Body of pancreas (tissue), 4 donors: ENCODE measurements at regions of chr12 and their contacts with region 1.

Region 1: DNA sequence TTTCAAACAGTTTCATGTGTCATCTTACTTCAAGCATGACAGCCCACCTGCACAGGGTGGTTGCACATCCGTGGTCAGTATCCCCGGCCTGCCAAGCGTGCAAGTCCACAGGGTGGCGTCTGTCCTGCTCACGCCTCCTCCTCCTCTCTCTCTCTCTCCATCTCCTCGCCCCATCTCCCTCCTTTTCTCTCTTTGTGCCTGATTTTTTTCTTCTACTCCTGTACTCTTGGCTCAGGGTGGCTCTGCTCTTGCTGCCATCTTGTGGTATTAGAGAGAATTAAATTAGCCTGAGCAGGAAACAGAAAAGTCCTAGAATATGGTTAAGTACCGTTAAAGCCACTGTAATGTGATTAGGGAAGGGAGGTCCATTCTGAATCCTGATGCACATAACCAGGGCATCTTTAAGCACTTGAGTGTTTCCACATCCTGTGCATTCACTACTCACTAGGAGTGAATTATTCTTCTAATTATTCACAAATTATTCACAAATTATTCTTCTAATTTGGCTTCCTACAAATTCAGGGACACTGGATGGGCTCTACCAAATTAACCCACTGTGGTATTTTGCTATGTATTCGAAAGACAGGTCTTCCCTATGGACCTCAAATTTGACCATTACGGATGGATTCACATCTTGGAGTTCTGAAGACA is 25.5 kb upstream of the DTX1 start:
- DNase-seq: peak; percentile 18 to 43 (median 36)
- ATAC-seq: peak; percentile 56
- H3K4me3 ChIP-seq: no peak overlapping the region
- H3K27ac ChIP-seq: no peak overlapping the region
- H3K4me1 ChIP-seq: no peaks in the 10 kb centered on the region
- H3K27me3 ChIP-seq: no peaks in the 10 kb centered on the region
- CTCF ChIP-seq: peak; percentile 47 to 82 (median 76)
- POLR2A ChIP-seq: no peak

Region 2: GRCh38 chr12:112891093-112892024 is 139.6 kb before region 1 on chr12:
- intact Hi-C with region 1: loop called (anchors 10 kb)
- DNase-seq: peak in 3 of 4 donors; percentile 7 to 22 (median 15)
- ATAC-seq: no peak
- H3K4me3 ChIP-seq: no peak overlapping the region
- H3K27ac ChIP-seq: no peak overlapping the region
- H3K4me1 ChIP-seq: no peaks in the 10 kb centered on the region
- H3K27me3 ChIP-seq: no peaks in the 10 kb centered on the region
- CTCF ChIP-seq: no peak
- POLR2A ChIP-seq: no peak